ENCODE measurements at regions of chr17 and their contacts with region 1.

Region 1: GRCh38 chr17:21457051-21458026 is 81.2 kb downstream of the KCNJ12 start:
- DNase-seq: peak; percentile 58 to 99
- H3K4me3 ChIP-seq: peak overlapping the region in 3 of 4 experiments; percentile 12 to 43 (median 19); a peak in 5 of 8 replicates
- H3K27ac ChIP-seq: no peak overlapping the region
- H3K4me1 ChIP-seq: peaks cover 4 to 11% (median 7%) of the 10 kb centered on the region in 4 experiments
- H3K27me3 ChIP-seq: peaks cover 0 to 16% (median 11%) of the 10 kb centered on the region in 4 experiments; a peak in 6 of 7 replicates
- CTCF ChIP-seq: peak; percentile 70 to 87 (median 83)
- EP300 ChIP-seq: no peak
- POLR2A ChIP-seq: no peak
- RAD21 ChIP-seq: peak; percentile 60 to 76

Region 2: DNA sequence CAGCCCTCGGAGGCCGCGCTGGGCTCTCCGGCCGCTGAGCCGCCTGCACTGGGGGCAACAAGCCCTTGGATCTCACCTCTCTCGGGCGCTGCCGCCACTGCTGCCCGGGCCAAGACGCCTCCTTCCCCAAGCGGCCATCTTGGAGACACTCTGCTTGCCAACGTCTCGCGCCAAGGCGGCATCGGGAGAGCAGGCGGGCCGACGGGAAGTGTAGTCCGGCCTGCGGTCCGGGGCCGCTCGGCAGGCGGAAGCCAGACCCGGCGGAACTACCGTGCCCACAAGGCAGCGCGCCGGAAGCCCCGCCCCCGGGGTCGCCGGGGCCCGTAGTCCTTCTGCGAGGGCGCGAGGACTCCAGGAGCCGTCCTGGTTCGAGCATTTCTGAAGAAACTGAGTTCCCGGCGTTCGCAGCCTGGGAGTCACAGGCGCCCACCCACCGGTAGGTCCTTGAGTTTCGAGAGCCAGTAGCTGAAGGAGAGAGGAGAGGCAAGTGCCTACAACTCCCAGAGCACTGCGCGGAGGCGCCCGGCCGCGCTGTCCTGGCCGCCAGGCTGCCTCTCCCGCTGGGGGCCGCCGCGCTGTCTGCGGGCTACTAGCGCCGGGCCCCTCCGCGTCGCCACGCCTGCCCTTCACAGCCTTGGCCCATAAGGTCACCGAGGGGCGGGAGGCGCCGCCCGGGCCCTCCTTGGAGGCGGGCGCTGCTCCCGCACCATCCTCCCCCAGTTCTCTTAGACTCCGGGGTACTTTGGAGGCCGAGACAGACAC is 243.1 kb before region 1 on chr17 and contains the start of gene TMEM11:
- CTCF ChIA-PET with region 1: no interaction called
- POLR2A ChIA-PET with region 1: no interaction called
- DNase-seq: peak; percentile 83 to 97
- H3K4me3 ChIP-seq: peak within 1 kb of the TSS; percentile 85 to 97 (median 92)
- H3K27ac ChIP-seq: peak within 1 kb of the TSS; percentile 97
- H3K4me1 ChIP-seq: peaks cover 0 to 14% (median 5%) of the 10 kb centered on the region in 4 experiments; a peak in 4 of 7 replicates
- H3K27me3 ChIP-seq: no peaks in the 10 kb centered on the region
- CTCF ChIP-seq: no peak
- EP300 ChIP-seq: no peak
- POLR2A ChIP-seq: peak; percentile 25 to 61
- RAD21 ChIP-seq: no peak
- total RNA-seq, gene TMEM11: 33.3 and 34.2 TPM in 2 replicates

Region 3: GRCh38 chr17:21330436-21331160 is 126.7 kb before region 1 on chr17:
- CTCF ChIA-PET with region 1: no interaction called
- POLR2A ChIA-PET with region 1: no interaction called
- DNase-seq: no peak
- H3K4me3 ChIP-seq: no peak overlapping the region
- H3K27ac ChIP-seq: no peak overlapping the region
- H3K4me1 ChIP-seq: no peaks in the 10 kb centered on the region
- H3K27me3 ChIP-seq: no peaks in the 10 kb centered on the region
- CTCF ChIP-seq: no peak
- EP300 ChIP-seq: no peak
- POLR2A ChIP-seq: no peak
- RAD21 ChIP-seq: no peak

Region 4: GRCh38 chr17:21470861-21471260 is 13.5 kb after region 1 on chr17:
- CTCF ChIA-PET with region 1: interaction called, 10 read pairs
- POLR2A ChIA-PET with region 1: no interaction called
- DNase-seq: peak in 1 of 2 experiments; percentile 24
- H3K4me3 ChIP-seq: no peak overlapping the region
- H3K27ac ChIP-seq: no peak overlapping the region
- H3K4me1 ChIP-seq: peaks cover 0 to 3% (median 0%) of the 10 kb centered on the region in 4 experiments; a peak in 1 of 7 replicates
- H3K27me3 ChIP-seq: no peaks in the 10 kb centered on the region
- CTCF ChIP-seq: no peak
- EP300 ChIP-seq: no peak
- POLR2A ChIP-seq: no peak
- RAD21 ChIP-seq: no peak

Measured in H1 (cell line).